Right ventricle myocardium superior (tissue), 1 donor: ENCODE measurements at regions of chr4 and their contacts with region 1.

Region 1: GRCh38 chr4:1899149-1900086 is 28.2 kb downstream of the NSD2 start:
- DNase-seq: peak; percentile 70
- ATAC-seq: peak; percentile 95

Region 2: DNA sequence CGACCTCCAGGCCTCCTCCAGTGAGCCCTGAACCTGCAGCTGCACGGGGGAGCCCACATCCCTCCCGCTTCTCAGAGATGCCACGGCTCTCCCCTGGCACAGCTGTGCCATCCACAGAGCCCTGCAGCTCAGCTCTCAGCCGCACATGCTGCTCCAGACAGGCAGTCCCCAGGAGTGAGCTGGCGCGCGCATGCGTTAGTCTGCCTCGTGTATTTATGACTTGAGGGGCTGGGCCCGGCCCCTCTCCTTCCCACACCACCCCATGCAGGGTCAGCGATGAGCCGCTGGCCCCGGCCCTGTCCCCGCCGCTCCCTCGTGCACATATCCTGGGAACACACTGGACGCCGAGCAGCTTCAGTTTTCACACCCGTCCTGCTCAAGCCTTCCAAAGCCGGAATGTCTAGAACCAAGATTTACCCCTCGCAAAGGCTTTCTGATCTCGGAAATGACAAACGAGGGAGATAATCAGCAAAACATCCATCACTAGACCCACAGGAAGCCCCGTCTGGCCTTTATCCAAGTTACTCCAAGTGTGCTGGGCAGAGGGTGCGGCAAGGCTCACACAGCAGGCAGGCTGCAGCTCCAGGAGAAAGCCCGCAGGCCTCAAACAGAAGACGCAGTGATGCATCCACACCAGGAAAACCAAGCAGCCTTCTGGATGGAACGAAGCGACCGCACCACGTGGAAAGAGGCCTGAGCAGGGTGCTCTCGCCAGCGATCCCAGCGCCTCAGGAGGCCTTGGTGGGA is 991.6 kb before region 1 on chr4:
- intact Hi-C with region 1: no loop called
- DNase-seq: no peak
- ATAC-seq: no peak

Region 3: DNA sequence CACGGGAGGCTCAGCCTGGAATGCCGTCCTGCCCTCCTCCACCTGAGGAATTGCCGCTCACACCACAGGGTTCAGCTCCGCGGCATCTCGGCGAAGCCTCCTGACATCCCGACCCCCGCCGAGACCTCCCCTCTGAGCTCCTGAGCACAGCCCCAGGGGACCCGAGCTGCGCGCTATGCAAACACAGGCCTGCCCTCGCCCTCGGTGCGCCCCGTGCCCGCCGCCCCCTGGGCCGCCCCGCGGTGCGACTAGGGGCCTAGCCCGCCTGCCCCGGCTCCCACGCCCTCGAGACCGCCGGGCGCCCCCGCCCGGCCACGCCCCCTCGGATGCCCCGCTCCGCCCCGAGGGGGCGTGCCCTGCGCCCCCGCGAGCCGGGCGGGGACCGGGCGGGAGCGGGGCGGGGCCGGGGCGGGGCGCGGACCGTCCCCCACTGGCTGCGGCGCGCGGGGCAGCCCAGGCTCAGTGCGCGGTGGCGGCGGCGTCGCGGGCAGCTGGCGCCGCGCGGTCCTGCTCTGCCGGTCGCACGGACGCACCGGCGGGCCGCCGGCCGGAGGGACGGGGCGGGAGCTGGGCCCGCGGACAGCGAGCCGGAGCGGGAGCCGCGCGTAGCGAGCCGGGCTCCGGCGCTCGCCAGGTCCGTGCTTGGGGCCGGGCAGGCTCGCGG is 106.5 kb before region 1 on chr4 and contains the start of gene FGFR3:
- intact Hi-C with region 1: no loop called
- DNase-seq: peak; percentile 56
- ATAC-seq: peak; percentile 78
- total RNA-seq, gene FGFR3: 2.9 TPM

Region 4: GRCh38 chr4:1842993-1843448 is 56.4 kb before region 1 on chr4:
- intact Hi-C with region 1: loop called (anchors 10 kb)
- DNase-seq: peak; percentile 62
- ATAC-seq: peak; percentile 75

Region 5: GRCh38 chr4:1981251-1982058 is 82.0 kb after region 1 on chr4:
- intact Hi-C with region 1: no loop called
- DNase-seq: no peak
- ATAC-seq: no peak

Region 6: GRCh38 chr4:2673157-2673556 is 773.7 kb after region 1 on chr4:
- intact Hi-C with region 1: no loop called
- DNase-seq: no peak
- ATAC-seq: no peak